HEK293 (cell line): ENCODE measurements at regions of chr19 and their contacts with region 1.

Region 1: DNA sequence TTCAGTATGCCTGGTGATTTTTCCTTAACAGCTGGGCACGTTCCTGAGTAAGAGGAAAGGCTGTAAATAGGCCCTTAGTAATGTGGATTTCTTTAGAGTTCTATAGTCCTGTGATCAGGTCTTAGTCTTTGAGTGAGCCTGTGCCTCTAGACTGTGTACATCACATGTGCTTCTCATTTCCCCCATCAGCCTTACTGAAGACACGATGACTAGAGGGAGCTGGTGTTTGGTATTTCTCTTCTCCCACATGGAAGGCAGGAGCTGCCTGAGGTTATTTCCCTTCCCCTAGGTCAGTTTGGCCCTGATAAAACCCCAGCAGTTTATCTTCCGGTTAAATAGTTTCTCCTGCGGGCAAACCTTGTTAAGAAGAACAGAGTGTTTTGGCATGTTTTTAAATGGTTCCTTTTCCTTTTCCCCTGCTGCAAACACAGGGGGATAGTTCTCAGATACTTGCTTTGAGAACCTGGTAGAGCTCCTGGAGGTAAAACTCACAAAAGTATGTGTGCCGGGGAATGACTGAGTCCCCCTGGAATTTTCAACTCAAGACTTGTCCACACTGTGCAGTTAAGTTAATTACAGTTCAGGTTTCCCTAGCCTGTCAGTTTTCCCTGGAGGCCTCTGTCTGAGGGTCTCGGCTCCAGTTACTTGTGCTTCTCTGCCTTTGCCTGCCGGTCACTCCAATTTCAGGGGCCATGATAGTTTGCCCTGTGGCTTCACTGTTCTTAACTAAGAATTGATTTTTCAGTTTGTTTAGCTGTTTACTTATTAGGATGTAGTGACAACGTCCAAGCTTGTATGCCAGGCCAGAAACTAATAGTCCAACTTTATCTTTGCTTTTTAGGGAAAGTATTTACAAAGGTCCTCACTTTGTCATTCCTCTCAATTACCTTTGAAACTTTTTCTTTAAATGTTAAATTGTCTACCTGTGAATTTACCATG is 94.4 kb downstream of the URI1 start:
- H3K4me3 ChIP-seq: no peak overlapping the region
- H3K27ac ChIP-seq: no peak overlapping the region
- H3K4me1 ChIP-seq: no peaks in the 10 kb centered on the region
- CTCF ChIP-seq: no peak

Region 2: GRCh38 chr19:30046522-30046921 is 10.1 kb after region 1 on chr19:
- CTCF ChIA-PET with region 1: interaction called, 17 read pairs
- POLR2A ChIA-PET with region 1: no interaction called
- H3K4me3 ChIP-seq: no peak overlapping the region
- H3K27ac ChIP-seq: no peak overlapping the region
- H3K4me1 ChIP-seq: peaks cover 26% of the 10 kb centered on the region
- CTCF ChIP-seq: peak; percentile 80; the same call in 1 of the 2 replicates